ENCODE measurements at regions of chr1 and their contacts with region 1.

Region 1: GRCh38 chr1:154936555-154937084 is at the start of gene PMVK:
- DNase-seq: peak; percentile 96
- H3K4me3 Mint-ChIP-seq: peak within 1 kb of the TSS; percentile 88
- H3K27ac Mint-ChIP-seq: peak within 1 kb of the TSS; percentile 94
- H3K4me1 Mint-ChIP-seq: peaks cover 59% of the 10 kb centered on the region
- H3K27me3 Mint-ChIP-seq: no peaks in the 10 kb centered on the region
- total RNA-seq, gene PMVK: 40.7 to 41.8 TPM

Region 2: DNA sequence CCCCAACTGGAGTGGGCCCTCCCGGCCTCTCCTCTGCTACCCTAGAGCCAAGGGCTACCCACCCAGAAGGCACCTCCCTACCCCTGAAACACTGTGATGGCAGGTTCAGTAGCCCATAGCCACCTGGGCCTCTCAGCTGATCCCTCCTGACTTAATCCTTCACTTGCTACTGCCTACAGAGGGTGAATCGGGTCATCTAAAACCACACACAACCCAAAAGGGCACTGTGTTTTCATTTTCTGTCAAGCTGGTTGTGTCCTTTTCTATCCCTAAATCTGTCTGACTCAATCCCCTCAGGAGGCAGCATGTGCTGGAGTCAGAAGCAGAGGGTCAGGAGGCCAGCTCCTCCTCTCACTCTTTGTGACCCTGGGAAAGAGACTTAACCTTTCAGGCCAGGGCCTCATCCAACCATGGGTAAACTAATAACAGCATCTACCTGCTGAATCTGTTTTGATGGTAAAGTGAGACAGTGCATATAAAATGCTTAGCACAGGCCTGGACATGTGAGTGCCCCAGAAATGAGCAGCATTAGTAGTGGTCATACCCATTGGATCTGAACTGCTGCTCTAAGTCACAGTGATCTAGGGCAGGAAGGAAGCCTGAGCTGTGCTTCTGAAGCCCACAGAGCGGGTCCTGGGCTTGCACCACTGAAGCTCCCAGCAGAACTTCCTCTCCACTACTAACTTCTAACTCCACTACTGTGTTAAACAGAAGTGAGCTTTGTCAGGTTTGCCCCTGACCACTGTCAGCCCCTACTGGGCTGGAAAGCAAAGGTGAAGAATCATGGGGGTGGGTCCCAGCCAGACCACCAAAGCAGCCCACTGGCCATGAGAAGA is 11.1 kb before region 1 on chr1:
- CTCF ChIA-PET with region 1: interaction called, 3 read pairs
- POLR2A ChIA-PET with region 1: interaction called, 32 read pairs
- DNase-seq: no peak
- H3K4me3 Mint-ChIP-seq: no peak overlapping the region
- H3K27ac Mint-ChIP-seq: peak overlapping the region; percentile 67
- H3K4me1 Mint-ChIP-seq: peaks cover 18% of the 10 kb centered on the region
- H3K27me3 Mint-ChIP-seq: no peaks in the 10 kb centered on the region

Region 3: DNA sequence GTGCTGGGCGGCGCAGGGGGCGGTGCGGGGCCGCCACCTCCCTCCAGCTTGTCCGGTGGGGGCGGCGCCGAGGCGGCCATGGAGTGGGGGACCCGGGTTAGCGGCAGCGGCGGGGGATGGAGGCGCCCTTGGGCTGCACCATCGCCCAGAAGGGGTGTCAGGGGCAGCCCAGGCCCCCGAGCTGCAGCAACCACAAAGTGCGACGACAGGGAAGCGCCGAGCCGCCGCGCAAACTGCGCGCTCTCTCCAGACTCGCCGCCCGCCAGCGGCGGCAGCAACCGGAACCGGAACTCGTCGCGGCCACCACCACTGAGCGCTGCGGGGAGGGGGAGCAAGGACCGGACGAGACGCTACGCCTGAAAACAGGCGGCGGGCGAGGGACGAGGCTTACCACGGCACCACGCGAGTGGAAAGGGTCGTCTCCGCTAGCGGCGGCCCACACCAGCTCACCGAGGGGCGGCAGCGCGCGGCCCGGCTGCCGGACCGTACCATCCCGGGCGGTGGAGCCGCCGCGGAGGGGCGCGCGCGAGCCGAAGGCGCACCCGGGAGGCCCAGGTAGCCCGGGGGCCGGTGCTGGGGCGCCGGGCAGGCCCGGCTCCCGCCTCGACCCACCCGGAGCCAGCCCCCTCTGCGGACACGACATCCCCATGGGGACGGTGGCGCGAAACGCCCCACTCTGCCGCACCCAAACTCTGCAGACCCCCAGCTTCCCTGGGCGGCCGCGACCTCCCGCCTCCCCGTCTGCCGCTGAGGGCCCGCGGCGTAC is 25.1 kb after region 1 on chr1 and contains the start of gene PYGO2:
- CTCF ChIA-PET with region 1: interaction called, 12 read pairs
- POLR2A ChIA-PET with region 1: interaction called, 25 read pairs
- DNase-seq: peak; percentile 83
- H3K4me3 Mint-ChIP-seq: peak within 1 kb of the TSS; percentile 97
- H3K27ac Mint-ChIP-seq: peak within 1 kb of the TSS; percentile 89
- H3K4me1 Mint-ChIP-seq: peaks cover 56% of the 10 kb centered on the region
- H3K27me3 Mint-ChIP-seq: no peaks in the 10 kb centered on the region
- total RNA-seq, gene PYGO2: 48.7 to 49.7 TPM

Region 4: DNA sequence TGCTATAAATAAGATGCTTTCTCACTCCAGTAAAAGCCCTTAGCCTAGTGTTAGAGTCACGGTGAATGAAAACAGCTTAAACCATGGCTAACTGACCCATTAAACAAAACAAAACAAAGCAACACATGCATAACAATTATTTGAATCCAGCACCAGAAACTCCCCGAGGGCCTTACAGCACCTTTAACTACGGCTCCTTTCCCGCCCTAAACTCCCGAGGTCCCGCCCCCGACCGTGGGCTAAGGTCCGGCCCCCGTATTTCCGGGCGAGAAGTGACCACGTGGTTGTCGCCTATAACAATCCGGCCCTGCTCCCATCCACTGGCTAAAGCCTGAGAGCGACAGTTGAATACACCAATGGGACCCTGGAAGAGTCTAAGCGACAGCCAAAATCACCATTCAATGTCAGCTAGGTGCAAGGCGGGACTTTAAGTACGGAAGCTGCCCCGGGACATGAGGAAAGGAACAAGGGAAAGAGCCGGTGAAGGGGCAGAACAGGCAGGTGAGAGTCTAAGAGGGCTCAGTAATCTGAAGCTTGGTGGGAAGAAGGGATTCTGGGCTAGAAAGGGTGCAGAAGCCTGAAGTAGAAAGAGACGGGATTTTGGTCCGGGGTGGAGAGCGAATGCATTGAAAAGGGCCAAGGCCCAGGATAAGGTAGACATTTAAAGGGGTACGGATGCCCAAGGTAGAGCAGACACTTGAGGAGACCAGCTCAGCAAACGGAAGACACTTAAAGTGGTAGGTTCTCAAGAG is 46.5 kb after region 1 on chr1 and contains the start of gene FLAD1:
- CTCF ChIA-PET with region 1: interaction called, 5 read pairs
- POLR2A ChIA-PET with region 1: interaction called, 20 read pairs
- DNase-seq: peak; percentile 97
- H3K4me3 Mint-ChIP-seq: no peak within 1 kb of the TSS
- H3K27ac Mint-ChIP-seq: no peak within 1 kb of the TSS
- H3K4me1 Mint-ChIP-seq: peaks cover 28% of the 10 kb centered on the region
- H3K27me3 Mint-ChIP-seq: no peaks in the 10 kb centered on the region
- total RNA-seq, gene FLAD1: 34.7 to 35.1 TPM

Region 5: GRCh38 chr1:155008015-155008979 is 71.7 kb after region 1 on chr1:
- CTCF ChIA-PET with region 1: no interaction called
- POLR2A ChIA-PET with region 1: interaction called, 13 read pairs
- DNase-seq: peak; percentile 77
- H3K4me3 Mint-ChIP-seq: peak overlapping the region; percentile 96
- H3K27ac Mint-ChIP-seq: peak overlapping the region; percentile 90
- H3K4me1 Mint-ChIP-seq: peaks cover 75% of the 10 kb centered on the region
- H3K27me3 Mint-ChIP-seq: no peaks in the 10 kb centered on the region